ENCODE measurements at regions of chr6 and their contacts with region 1.

Region 1: DNA sequence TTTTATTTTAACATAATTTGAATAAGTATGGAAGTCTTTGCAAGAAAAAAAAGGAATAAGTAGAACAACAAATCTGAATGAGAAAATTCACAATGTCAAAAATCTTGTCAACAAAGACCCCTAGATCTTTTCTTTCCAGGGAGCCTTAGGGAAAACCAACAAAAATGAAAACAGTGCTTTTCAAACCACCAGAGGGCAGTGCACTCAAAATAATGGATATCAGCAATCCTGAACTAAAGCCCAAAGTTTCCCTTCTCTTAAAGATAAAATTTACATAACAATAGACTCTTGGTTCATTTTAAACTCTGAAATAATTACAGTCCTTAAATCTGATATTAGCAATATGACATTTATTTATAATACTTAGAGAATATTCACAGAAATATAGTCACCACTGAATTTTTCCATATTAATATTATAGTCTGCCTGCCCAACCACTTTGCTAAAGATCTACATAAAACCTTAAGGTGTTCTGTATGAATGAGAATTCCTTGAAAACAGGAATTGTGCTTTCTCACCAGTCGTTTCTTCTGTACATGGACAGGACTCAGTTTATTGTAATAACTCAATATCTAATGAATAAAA is 105.3 kb upstream of the BMP5 start:
- DNase-seq: peak; percentile 54
- H3K4me3 ChIP-seq: no peak overlapping the region
- H3K27ac ChIP-seq: no peak overlapping the region
- H3K4me1 ChIP-seq: no peaks in the 10 kb centered on the region
- H3K27me3 ChIP-seq: no peaks in the 10 kb centered on the region
- CTCF ChIP-seq: peak; percentile 67 to 80 (median 71)
- POLR2A ChIP-seq: no peak

Region 2: GRCh38 chr6:56292505-56293181 is 311.9 kb after region 1 on chr6:
- intact Hi-C with region 1: loop called (anchors 5 kb)
- DNase-seq: peak; percentile 53
- H3K4me3 ChIP-seq: no peak overlapping the region
- H3K27ac ChIP-seq: no peak overlapping the region
- H3K4me1 ChIP-seq: no peaks in the 10 kb centered on the region
- H3K27me3 ChIP-seq: no peaks in the 10 kb centered on the region
- CTCF ChIP-seq: peak; percentile 57 to 78 (median 62)
- POLR2A ChIP-seq: no peak